PC-9 (cell line): ENCODE measurements at regions of chr19 and their contacts with region 1.

Region 1: DNA sequence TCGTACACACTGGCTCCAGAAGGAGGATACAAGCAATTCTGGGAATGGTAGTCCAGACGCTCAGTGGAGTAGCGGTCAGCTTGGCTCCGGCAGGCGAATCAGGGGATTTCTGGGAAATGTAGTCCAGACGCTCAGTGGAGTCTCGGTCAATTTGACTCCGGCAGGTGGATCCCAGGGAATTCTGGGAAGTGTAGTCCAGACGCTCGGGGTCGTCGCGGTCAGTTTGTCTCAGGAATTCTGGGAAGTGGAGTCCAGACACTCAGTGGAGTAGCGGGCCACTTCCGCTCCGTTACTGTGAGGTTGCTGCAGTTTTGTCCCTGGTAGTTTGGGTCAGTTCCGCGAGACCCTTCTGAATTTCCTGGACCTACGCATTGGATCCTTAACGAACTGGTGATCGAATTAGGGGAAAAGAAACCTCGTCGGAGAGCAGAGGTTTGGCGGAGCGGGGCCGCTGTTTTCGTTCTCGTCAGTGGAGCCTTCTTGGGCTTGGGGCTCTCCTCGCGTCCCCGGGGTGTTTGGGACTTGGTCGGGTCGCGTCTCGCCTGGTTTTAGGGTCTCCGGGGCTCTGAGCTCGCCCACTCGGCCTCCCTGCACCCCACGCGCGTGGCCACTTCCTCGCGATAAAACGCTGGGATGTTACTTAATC is at the start of gene ZNF225:
- DNase-seq: peak; percentile 91 to 97
- H3K4me3 ChIP-seq: peak within 1 kb of the TSS; percentile 80
- H3K27ac ChIP-seq: no peak within 1 kb of the TSS
- H3K4me1 ChIP-seq: peaks cover 14% of the 10 kb centered on the region; the same call in 1 of the 2 replicates
- H3K27me3 ChIP-seq: no peaks in the 10 kb centered on the region
- CTCF ChIP-seq: no peak
- total RNA-seq, gene ZNF225: 3.5 and 5.4 TPM in 2 replicates

Region 2: GRCh38 chr19:43983912-43984686 is 129.2 kb before region 1 on chr19 and contains the start of gene ZNF155:
- CTCF ChIA-PET with region 1: no interaction called
- POLR2A ChIA-PET with region 1: no interaction called
- intact Hi-C with region 1: loop called (anchors 1 kb)
- DNase-seq: peak; percentile 84 to 94
- H3K4me3 ChIP-seq: peak within 1 kb of the TSS; percentile 82
- H3K27ac ChIP-seq: 0 out of 2 replicates have a peak within 1 kb of the TSS, but pooled peaks have one; percentile 4
- H3K4me1 ChIP-seq: no peaks in the 10 kb centered on the region; the same call in 1 of the 2 replicates
- H3K27me3 ChIP-seq: no peaks in the 10 kb centered on the region
- CTCF ChIP-seq: no peak
- total RNA-seq, gene ZNF155: 5.0 and 6.1 TPM in 2 replicates

Region 3: GRCh38 chr19:44051654-44052402 is 61.4 kb before region 1 on chr19 and contains the start of gene ZNF223:
- CTCF ChIA-PET with region 1: no interaction called
- POLR2A ChIA-PET with region 1: no interaction called
- intact Hi-C with region 1: loop called (anchors 1 kb)
- DNase-seq: peak; percentile 94 to 97
- H3K4me3 ChIP-seq: peak within 1 kb of the TSS; percentile 64
- H3K27ac ChIP-seq: peak within 1 kb of the TSS; percentile 42
- H3K4me1 ChIP-seq: peaks cover 17% of the 10 kb centered on the region
- H3K27me3 ChIP-seq: no peaks in the 10 kb centered on the region
- CTCF ChIP-seq: no peak
- total RNA-seq, gene ZNF223: 3.5 and 4.2 TPM in 2 replicates

Region 4: GRCh38 chr19:44071824-44072542 is 41.3 kb before region 1 on chr19 and contains the start of gene ZNF284:
- CTCF ChIA-PET with region 1: no interaction called
- POLR2A ChIA-PET with region 1: no interaction called
- intact Hi-C with region 1: no loop called
- DNase-seq: peak; percentile 84 to 88
- H3K4me3 ChIP-seq: peak within 1 kb of the TSS; percentile 70
- H3K27ac ChIP-seq: peak within 1 kb of the TSS; percentile 17; the same call in 1 of the 2 replicates
- H3K4me1 ChIP-seq: peaks cover 7% of the 10 kb centered on the region; the same call in 1 of the 2 replicates
- H3K27me3 ChIP-seq: no peaks in the 10 kb centered on the region
- CTCF ChIP-seq: no peak
- total RNA-seq, gene ZNF284: 1.9 and 2.0 TPM in 2 replicates

Region 5: GRCh38 chr19:44083866-44084265 is 29.4 kb before region 1 on chr19:
- CTCF ChIA-PET with region 1: no interaction called
- POLR2A ChIA-PET with region 1: no interaction called
- intact Hi-C with region 1: no loop called
- DNase-seq: no peak
- H3K4me3 ChIP-seq: no peak overlapping the region
- H3K27ac ChIP-seq: no peak overlapping the region
- H3K4me1 ChIP-seq: no peaks in the 10 kb centered on the region
- H3K27me3 ChIP-seq: no peaks in the 10 kb centered on the region
- CTCF ChIP-seq: no peak

Region 6: GRCh38 chr19:44149776-44150175 is 36.5 kb after region 1 on chr19:
- CTCF ChIA-PET with region 1: no interaction called
- POLR2A ChIA-PET with region 1: no interaction called
- intact Hi-C with region 1: no loop called
- DNase-seq: no peak
- H3K4me3 ChIP-seq: no peak overlapping the region
- H3K27ac ChIP-seq: no peak overlapping the region
- H3K4me1 ChIP-seq: no peaks in the 10 kb centered on the region
- H3K27me3 ChIP-seq: no peaks in the 10 kb centered on the region
- CTCF ChIP-seq: no peak

Region 7: DNA sequence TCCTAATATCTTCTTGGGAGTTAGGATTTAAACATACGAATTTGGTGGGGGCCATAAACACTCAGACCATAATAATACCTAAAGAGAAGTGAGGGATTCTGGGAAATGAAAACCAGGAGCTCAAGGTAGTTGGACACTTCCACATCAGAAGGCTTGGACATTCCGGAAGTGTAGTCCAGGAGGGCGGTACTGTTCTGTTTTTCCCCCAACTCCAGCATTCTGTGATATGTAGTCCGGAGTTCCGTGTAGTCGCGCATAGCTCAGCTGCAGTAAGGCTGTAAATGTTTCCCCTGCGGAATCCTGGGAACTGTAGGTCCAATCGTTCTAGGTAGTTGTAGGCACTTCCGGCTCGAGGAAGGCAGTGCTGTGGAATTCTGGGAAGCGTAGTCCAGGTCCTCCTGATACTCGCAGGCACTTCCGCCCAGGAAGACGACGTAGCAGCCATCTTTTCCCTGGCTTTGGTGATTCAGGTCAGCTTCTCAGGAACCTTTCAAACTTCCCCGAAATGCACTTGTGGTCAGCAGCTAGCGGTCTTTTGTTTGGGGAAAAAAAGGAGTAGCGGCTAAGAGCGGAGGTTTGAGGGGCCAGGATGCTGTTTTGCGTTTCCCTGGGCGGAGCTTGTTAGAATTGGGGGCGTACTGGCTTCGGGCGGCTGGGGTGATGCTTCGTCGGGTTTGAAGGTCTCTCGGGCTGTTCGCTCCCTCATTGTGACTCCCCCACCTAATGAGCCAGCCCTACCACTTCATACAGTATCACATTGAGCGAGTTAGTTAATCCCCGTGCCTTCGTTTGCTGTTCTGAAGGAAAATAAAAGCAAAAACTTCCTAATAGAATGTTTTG is 51.6 kb after region 1 on chr19 and contains the start of gene ZNF226:
- CTCF ChIA-PET with region 1: no interaction called
- POLR2A ChIA-PET with region 1: no interaction called
- intact Hi-C with region 1: loop called (anchors 1 kb)
- DNase-seq: peak; percentile 86 to 99
- H3K4me3 ChIP-seq: peak within 1 kb of the TSS; percentile 81
- H3K27ac ChIP-seq: peak within 1 kb of the TSS; percentile 20; the same call in 1 of the 2 replicates
- H3K4me1 ChIP-seq: peaks cover 13% of the 10 kb centered on the region
- H3K27me3 ChIP-seq: no peaks in the 10 kb centered on the region
- CTCF ChIP-seq: no peak
- total RNA-seq, gene ZNF226: 12.9 and 21.7 TPM in 2 replicates

Region 8: GRCh38 chr19:44304659-44305193 is 191.5 kb after region 1 on chr19 and contains the start of gene ZNF235:
- CTCF ChIA-PET with region 1: no interaction called
- POLR2A ChIA-PET with region 1: no interaction called
- intact Hi-C with region 1: loop called (anchors 10 kb)
- DNase-seq: peak; percentile 85 to 97
- H3K4me3 ChIP-seq: peak within 1 kb of the TSS; percentile 84
- H3K27ac ChIP-seq: peak within 1 kb of the TSS; percentile 49
- H3K4me1 ChIP-seq: peaks cover 10% of the 10 kb centered on the region; the same call in 1 of the 2 replicates
- H3K27me3 ChIP-seq: no peaks in the 10 kb centered on the region
- CTCF ChIP-seq: no peak
- total RNA-seq, gene ZNF235: 4.3 and 5.9 TPM in 2 replicates